Esophagus muscularis mucosa (tissue), 4 donors: ENCODE measurements at regions of chr5 and their contacts with region 1.

Region 1: GRCh38 chr5:150217873-150218692 is 28.2 kb downstream of the SLC6A7 start:
- DNase-seq: no peak
- H3K4me3 ChIP-seq: no peak overlapping the region
- H3K27ac ChIP-seq: no peak overlapping the region
- H3K4me1 ChIP-seq: peaks cover 0 to 17% (median 4%) of the 10 kb centered on the region in 4 donors
- H3K27me3 ChIP-seq: no peaks in the 10 kb centered on the region
- CTCF ChIP-seq: peak; percentile 89 to 97 (median 95)
- EP300 ChIP-seq: no peak
- POLR2A ChIP-seq: no peak

Region 2: DNA sequence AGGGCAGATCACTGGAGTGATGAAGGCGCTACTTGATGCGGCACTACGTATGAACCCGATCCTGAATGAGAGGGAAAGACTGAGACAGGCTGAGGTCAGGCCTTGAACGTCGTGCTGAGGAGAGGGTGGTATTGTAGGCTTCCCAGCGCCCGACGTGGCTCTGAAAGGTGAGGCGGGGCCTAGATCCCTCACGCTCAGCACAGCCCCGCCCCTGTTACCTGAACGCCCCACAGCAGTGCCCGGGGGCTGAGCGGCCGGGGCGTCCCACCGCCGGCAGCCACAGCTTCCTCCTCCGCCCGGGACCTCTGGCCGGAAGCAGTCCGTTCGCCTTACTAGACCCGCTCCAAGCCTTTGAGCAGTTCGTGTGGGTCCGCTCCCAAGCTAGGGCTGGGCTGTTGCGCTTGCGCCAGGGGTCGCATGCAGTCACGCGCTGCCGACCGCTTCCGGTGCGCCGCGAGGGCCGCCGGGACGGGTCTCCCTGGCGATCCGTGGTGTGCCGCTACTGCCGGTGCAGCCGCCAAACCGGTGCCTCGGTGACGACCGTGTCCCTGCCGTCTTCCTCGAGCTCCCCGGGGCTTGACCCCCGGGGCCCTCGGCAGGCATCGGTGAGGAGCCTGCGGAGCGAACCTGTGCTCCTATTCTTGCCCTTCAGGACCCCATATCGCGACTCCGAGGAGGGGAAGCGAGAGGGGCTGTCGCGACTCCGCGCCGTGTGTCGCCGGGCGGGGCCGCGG is 217.7 kb before region 1 on chr5 and contains the starts of genes HMGXB3 and TIGD6:
- intact Hi-C with region 1: loop called (anchors 5 kb)
- DNase-seq: peak; percentile 96
- H3K4me3 ChIP-seq: peak within 1 kb of the TSS; percentile 81 to 93 (median 92)
- H3K27ac ChIP-seq: peak within 1 kb of the TSS; percentile 91 to 97 (median 93)
- H3K4me1 ChIP-seq: peaks cover 21 to 49% (median 36%) of the 10 kb centered on the region in 4 donors
- H3K27me3 ChIP-seq: no peaks in the 10 kb centered on the region
- CTCF ChIP-seq: no peak
- EP300 ChIP-seq: no peak
- POLR2A ChIP-seq: peak; percentile 76
- total RNA-seq, gene HMGXB3: 17.4 to 26.5 (median 23.1) TPM
- total RNA-seq, gene TIGD6: 2.9 to 3.5 (median 3.2) TPM

Region 3: DNA sequence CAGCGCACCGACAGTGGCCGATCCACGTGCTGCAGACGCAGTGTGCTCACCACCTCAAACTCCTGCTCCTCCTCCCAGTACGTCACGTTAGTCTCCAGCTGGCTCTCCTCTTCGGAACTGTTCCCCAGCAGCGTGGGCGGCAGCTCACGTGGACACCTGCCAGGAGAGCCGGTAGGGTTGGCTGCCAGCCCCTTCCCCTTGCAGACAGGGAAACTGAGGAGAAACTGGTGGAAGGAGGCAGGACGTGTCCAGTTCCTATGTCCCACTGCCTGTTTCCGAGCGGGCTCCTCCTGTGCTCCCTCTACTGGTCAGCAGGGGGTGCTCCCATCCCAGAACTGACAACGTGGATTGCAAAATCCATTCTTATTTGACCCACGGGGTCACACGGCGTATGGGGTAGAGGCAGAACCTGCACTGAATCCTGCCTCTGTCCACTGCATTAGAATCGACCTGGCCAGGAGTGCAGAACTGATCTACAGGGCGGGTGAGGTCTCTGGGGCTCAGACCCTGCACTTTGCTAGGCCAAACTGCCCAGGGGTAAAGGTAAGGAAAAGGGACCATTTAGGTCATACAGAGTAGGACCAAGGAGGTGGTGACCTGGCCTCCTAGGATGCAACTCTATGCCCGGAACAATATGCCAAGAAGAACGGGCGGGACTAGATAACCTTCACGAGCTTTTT is 88.1 kb before region 1 on chr5:
- intact Hi-C with region 1: loop called (anchors 1 kb)
- DNase-seq: peak; percentile 95
- H3K4me3 ChIP-seq: peak overlapping the region in 1 of 4 donors; percentile 33
- H3K27ac ChIP-seq: peak overlapping the region; percentile 16 to 30 (median 26)
- H3K4me1 ChIP-seq: peaks cover 27 to 62% (median 44%) of the 10 kb centered on the region in 4 donors
- H3K27me3 ChIP-seq: no peaks in the 10 kb centered on the region
- CTCF ChIP-seq: peak; percentile 95 to 97 (median 97)
- EP300 ChIP-seq: no peak
- POLR2A ChIP-seq: no peak

Region 4: DNA sequence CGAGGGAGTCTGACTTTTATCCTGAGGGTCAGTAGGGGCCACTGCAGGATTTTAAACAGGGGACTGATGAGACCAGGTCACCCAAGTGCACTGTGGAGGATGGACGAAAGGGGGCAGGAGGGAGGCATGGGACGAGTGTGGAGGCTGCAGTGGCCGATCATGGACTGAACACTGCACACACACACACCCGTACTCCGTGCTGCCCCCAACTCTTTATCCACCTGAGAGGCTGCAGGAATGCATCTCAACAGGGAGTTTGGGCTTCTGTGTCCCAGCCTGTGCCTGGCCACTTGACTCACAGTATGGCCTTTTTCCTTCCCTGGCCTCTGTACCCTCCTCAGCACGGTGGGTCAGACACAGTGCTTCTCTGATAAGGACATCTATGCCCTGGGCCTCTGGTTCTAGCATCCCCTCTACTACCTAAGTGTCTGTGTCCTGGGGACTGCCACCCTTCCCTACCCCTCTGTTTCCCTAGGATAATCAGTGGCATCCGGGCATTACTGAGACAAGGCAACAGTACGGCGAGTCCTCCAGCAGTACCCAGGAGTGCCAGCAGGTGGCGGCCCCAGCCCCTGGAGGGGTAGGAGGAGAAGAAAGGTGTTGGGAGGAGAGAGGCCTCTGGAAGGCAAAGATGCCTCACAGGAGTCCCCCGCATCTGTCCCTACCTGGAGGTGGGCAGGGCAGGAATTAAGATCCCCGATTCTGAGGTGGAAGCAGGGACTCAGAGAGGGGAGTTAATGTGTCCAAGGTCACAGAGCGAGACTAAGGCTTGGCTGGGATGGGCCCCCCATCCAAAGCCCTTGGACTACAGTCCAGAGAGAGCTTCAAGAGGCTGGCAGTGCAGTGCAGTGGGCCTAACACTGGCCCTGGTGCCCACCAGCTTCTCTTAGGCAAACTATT is 56.6 kb before region 1 on chr5:
- intact Hi-C with region 1: loop called (anchors 1 kb)
- DNase-seq: peak; percentile 97
- H3K4me3 ChIP-seq: no peak overlapping the region
- H3K27ac ChIP-seq: peak overlapping the region; percentile 85 to 90 (median 88)
- H3K4me1 ChIP-seq: peaks cover 42 to 66% (median 61%) of the 10 kb centered on the region in 4 donors
- H3K27me3 ChIP-seq: peaks cover 0 to 4% (median 0%) of the 10 kb centered on the region in 4 donors
- CTCF ChIP-seq: peak; percentile 85 to 93 (median 92)
- EP300 ChIP-seq: no peak
- POLR2A ChIP-seq: no peak

Region 5: DNA sequence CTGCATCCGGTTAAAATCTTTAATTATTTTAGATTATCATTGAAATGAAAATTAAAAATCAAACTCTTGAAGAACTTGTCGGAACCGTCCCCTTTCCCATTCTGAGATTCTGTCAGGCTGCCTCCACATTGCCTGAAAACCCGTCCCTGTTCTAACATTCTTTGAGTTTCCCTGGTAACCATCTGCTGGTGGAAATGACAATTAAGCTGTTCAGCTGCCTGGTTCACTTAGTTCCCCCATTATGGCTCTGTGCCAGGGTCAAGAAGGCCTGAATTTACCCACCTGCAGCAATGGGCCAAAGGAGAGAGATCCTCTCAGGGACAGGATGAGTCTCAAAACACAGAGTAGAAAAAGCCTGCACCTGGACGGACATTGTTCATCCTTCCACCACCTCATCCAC is 127.6 kb after region 1 on chr5:
- intact Hi-C with region 1: loop called (anchors 5 kb)
- DNase-seq: no peak
- H3K4me3 ChIP-seq: no peak overlapping the region
- H3K27ac ChIP-seq: no peak overlapping the region
- H3K4me1 ChIP-seq: peaks cover 0 to 8% (median 4%) of the 10 kb centered on the region in 4 donors
- H3K27me3 ChIP-seq: no peaks in the 10 kb centered on the region
- CTCF ChIP-seq: no peak
- EP300 ChIP-seq: no peak
- POLR2A ChIP-seq: no peak